Panc1 (cell line): ENCODE measurements at regions of chr2 and their contacts with region 1.

Region 1: GRCh38 chr2:229884775-229885699 is 36.8 kb downstream of the TRIP12 start:
- DNase-seq: no peak
- ATAC-seq: no peak
- H3K4me3 ChIP-seq: no peak overlapping the region
- H3K27ac ChIP-seq: no peak overlapping the region
- H3K4me1 ChIP-seq: peaks cover 7% of the 10 kb centered on the region; the same call in 1 of the 2 replicates
- H3K27me3 ChIP-seq: no peaks in the 10 kb centered on the region
- CTCF ChIP-seq: no peak

Region 2: GRCh38 chr2:229896857-229897256 is 11.8 kb after region 1 on chr2:
- CTCF ChIA-PET with region 1: no interaction called
- POLR2A ChIA-PET with region 1: interaction called, 10 read pairs
- in situ Hi-C with region 1: no loop called
- intact Hi-C with region 1: no loop called
- DNase-seq: no peak
- ATAC-seq: no peak
- H3K4me3 ChIP-seq: no peak overlapping the region
- H3K27ac ChIP-seq: no peak overlapping the region
- H3K4me1 ChIP-seq: peaks cover 12% of the 10 kb centered on the region
- H3K27me3 ChIP-seq: no peaks in the 10 kb centered on the region
- CTCF ChIP-seq: no peak